ENCODE measurements at regions of chr16 and their contacts with region 1.

Region 1: GRCh38 chr16:58551496-58551895 is 36.2 kb downstream of the SETD6 start:
- DNase-seq: no peak
- ATAC-seq: no peak
- H3K4me3 Mint-ChIP-seq: no peak overlapping the region
- H3K27ac Mint-ChIP-seq: no peak overlapping the region
- H3K4me1 Mint-ChIP-seq: no peaks in the 10 kb centered on the region
- H3K27me3 Mint-ChIP-seq: no peaks in the 10 kb centered on the region

Region 2: GRCh38 chr16:58533751-58534470 is 17.6 kb before region 1 on chr16:
- CTCF ChIA-PET with region 1: interaction called, 7 read pairs
- POLR2A ChIA-PET with region 1: no interaction called
- intact Hi-C with region 1: loop called in 1 of 2 experiments (anchors 2 kb)
- DNase-seq: no peak
- ATAC-seq: no peak
- H3K4me3 Mint-ChIP-seq: no peak overlapping the region
- H3K27ac Mint-ChIP-seq: no peak overlapping the region
- H3K4me1 Mint-ChIP-seq: no peaks in the 10 kb centered on the region
- H3K27me3 Mint-ChIP-seq: no peaks in the 10 kb centered on the region

Region 3: DNA sequence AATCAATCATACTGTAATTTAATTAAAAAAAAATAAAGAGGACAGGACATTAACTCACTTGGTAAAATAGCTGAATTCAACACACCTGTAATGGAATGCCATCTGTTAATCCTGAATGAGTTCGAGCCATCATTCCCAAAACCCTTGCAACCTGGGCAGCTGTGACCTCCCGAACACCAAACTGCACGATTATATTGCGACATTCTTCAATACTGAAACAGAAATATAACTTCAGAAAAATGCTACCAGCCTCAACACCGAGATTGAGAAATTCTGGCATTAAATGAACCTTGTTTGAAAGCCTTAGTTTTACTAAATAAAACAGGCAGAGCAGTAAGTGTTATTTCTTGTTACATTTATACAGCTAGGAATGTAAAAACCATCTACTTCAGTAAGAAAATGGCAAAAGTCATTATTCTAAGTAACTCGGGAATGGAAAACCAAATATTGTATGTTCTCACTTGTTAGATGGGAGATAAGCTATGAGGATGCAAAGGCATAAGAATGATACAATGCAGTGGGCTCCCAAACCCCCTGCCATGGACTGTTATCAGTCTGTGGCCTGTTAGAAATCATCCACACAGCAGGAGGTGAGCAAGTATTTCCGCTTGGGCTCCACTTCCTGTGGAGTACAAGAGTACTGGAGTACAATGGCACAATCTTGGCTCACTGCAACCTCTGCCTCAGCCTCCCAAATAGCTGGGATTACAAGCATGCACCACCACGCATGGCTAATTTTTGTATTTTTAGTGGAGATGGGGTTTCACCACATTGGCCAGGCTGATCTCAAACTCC is 31.7 kb after region 1 on chr16:
- CTCF ChIA-PET with region 1: no interaction called
- POLR2A ChIA-PET with region 1: no interaction called
- intact Hi-C with region 1: loop called in 1 of 2 experiments (anchors 2 kb)
- DNase-seq: peak; percentile 42
- ATAC-seq: peak; percentile 44
- H3K4me3 Mint-ChIP-seq: no peak overlapping the region
- H3K27ac Mint-ChIP-seq: no peak overlapping the region
- H3K4me1 Mint-ChIP-seq: peaks cover 12% of the 10 kb centered on the region
- H3K27me3 Mint-ChIP-seq: no peaks in the 10 kb centered on the region

Measured in activated CD4-positive, alpha-beta T cell treated with anti-CD3 and anti-CD28 coated beads for 36 hours (primary cell).